ENCODE measurements at regions of chr11 and their contacts with region 1.

Region 1: DNA sequence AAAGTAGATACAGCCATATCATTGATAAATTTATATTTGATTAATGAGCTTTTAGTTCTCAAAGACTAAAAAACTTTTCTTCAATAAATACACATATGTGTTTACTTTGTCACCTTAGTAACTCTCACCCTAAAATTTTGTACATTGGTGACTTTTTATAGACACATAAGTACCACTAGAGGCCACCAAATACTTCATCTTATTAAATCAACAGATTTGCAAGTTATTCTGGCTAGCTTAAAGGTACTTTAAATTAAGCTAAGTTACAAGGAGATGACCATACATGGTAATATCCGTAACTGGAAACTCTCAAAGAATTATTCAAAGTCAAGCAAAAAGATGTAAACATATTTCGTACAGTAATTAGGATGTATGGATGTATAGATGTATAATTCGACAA is 112.2 kb downstream of the SBF2 start:
- DNase-seq: peak; percentile 35
- H3K4me3 ChIP-seq: no peak overlapping the region
- H3K27me3 ChIP-seq: no peaks in the 10 kb centered on the region
- CTCF ChIP-seq: peak; percentile 21; the same call in 1 of the 2 replicates

Region 2: GRCh38 chr11:10117709-10118351 is 64.0 kb before region 1 on chr11:
- CTCF ChIA-PET with region 1: no interaction called
- POLR2A ChIA-PET with region 1: interaction called, 10 read pairs
- DNase-seq: peak; percentile 49
- H3K4me3 ChIP-seq: no peak overlapping the region
- H3K27me3 ChIP-seq: no peaks in the 10 kb centered on the region
- CTCF ChIP-seq: no peak